ENCODE measurements at regions of chr3 and their contacts with region 1.

Region 1: GRCh38 chr3:112561731-112562688 is at the starts of genes ATG3 and SLC35A5:
- DNase-seq: peak; percentile 97 to 100 (median 99)
- ATAC-seq: peak; percentile 88
- H3K4me3 ChIP-seq: peak within 1 kb of the TSS; percentile 86
- H3K4me3 Mint-ChIP-seq: peak within 1 kb of the TSS; percentile 93 to 100 (median 98)
- H3K27ac ChIP-seq: peak within 1 kb of the TSS; percentile 91
- H3K27ac Mint-ChIP-seq: peak within 1 kb of the TSS; percentile 96 to 100 (median 99)
- H3K4me1 ChIP-seq: peaks cover 13 to 15% of the 10 kb centered on the region in 2 donors
- H3K4me1 Mint-ChIP-seq: peaks cover 25 to 73% (median 58%) of the 10 kb centered on the region in 7 donors
- H3K27me3 ChIP-seq: no peaks in the 10 kb centered on the region
- H3K27me3 Mint-ChIP-seq: no peaks in the 10 kb centered on the region
- total RNA-seq, gene ATG3: 35.1 to 65.8 (median 50.3) TPM
- total RNA-seq, gene SLC35A5: 10.4 to 24.6 (median 20.8) TPM

Region 2: GRCh38 chr3:112074721-112075497 is 487.1 kb before region 1 on chr3:
- CTCF ChIA-PET with region 1: no interaction called
- POLR2A ChIA-PET with region 1: interaction called, 6 read pairs
- intact Hi-C with region 1: loop called in 1 of 2 experiments (anchors 1 kb)
- DNase-seq: peak in 8 of 9 donors; percentile 29 to 60 (median 52)
- ATAC-seq: peak; percentile 88
- H3K4me3 ChIP-seq: no peak overlapping the region
- H3K4me3 Mint-ChIP-seq: peak overlapping the region; percentile 32 to 76 (median 56)
- H3K27ac ChIP-seq: peak overlapping the region; percentile 32
- H3K27ac Mint-ChIP-seq: peak overlapping the region; percentile 72 to 95 (median 85)
- H3K4me1 ChIP-seq: peaks cover 4 to 17% of the 10 kb centered on the region in 2 donors
- H3K4me1 Mint-ChIP-seq: peaks cover 17 to 57% (median 51%) of the 10 kb centered on the region in 7 donors
- H3K27me3 ChIP-seq: no peaks in the 10 kb centered on the region
- H3K27me3 Mint-ChIP-seq: peaks cover 0 to 3% (median 0%) of the 10 kb centered on the region in 5 donors

Region 3: DNA sequence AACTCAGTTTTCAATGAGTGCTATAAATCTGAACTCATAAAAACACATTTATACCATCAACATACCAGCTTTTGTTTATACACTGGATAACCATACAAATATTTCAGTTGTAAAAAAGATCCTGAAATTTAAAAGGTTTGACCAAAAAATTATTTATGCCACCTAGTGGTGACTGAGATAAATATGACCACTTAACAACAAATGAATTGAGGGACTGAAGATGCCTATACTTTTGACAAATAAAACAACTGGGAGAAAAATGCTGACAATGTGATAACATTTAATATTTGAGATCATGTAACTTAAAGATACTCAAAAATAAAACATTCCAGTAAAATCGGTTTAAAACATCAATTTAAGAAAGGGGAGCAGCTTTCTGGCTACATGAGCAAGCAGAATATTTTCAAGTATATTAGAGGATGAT is 30.6 kb before region 1 on chr3:
- CTCF ChIA-PET with region 1: no interaction called
- POLR2A ChIA-PET with region 1: interaction called, 10 read pairs
- intact Hi-C with region 1: no loop called
- DNase-seq: peak in 5 of 9 donors; percentile 25 to 40 (median 25)
- ATAC-seq: peak; percentile 45
- H3K4me3 ChIP-seq: no peak overlapping the region
- H3K4me3 Mint-ChIP-seq: no peak overlapping the region
- H3K27ac ChIP-seq: no peak overlapping the region
- H3K27ac Mint-ChIP-seq: peak overlapping the region in 6 of 9 donors; percentile 7 to 72 (median 14)
- H3K4me1 ChIP-seq: no peaks in the 10 kb centered on the region
- H3K4me1 Mint-ChIP-seq: peaks cover 0 to 5% (median 3%) of the 10 kb centered on the region in 7 donors
- H3K27me3 ChIP-seq: no peaks in the 10 kb centered on the region
- H3K27me3 Mint-ChIP-seq: no peaks in the 10 kb centered on the region

Region 4: GRCh38 chr3:112973325-112974177 is 411.5 kb after region 1 on chr3:
- CTCF ChIA-PET with region 1: interaction called, 5 read pairs
- POLR2A ChIA-PET with region 1: no interaction called
- intact Hi-C with region 1: loop called in 1 of 2 experiments (anchors 5 kb)
- DNase-seq: peak in 8 of 9 donors; percentile 31 to 64 (median 52)
- ATAC-seq: peak; percentile 87
- H3K4me3 ChIP-seq: peak overlapping the region; percentile 72
- H3K4me3 Mint-ChIP-seq: peak overlapping the region; percentile 83 to 98 (median 94)
- H3K27ac ChIP-seq: peak overlapping the region; percentile 80
- H3K27ac Mint-ChIP-seq: peak overlapping the region; percentile 86 to 97 (median 95)
- H3K4me1 ChIP-seq: peaks cover 28 to 43% of the 10 kb centered on the region in 2 donors
- H3K4me1 Mint-ChIP-seq: peaks cover 56 to 88% (median 74%) of the 10 kb centered on the region in 7 donors
- H3K27me3 ChIP-seq: no peaks in the 10 kb centered on the region
- H3K27me3 Mint-ChIP-seq: no peaks in the 10 kb centered on the region

Region 5: GRCh38 chr3:113531826-113532697 is 970.1 kb after region 1 on chr3 and contains the start of gene SIDT1:
- CTCF ChIA-PET with region 1: no interaction called
- POLR2A ChIA-PET with region 1: no interaction called
- intact Hi-C with region 1: loop called (anchors 1 to 5 kb)
- DNase-seq: peak; percentile 31 to 87 (median 78)
- ATAC-seq: peak; percentile 87
- H3K4me3 ChIP-seq: peak within 1 kb of the TSS; percentile 96
- H3K4me3 Mint-ChIP-seq: peak within 1 kb of the TSS; percentile 92 to 100 (median 98)
- H3K27ac ChIP-seq: peak within 1 kb of the TSS; percentile 95
- H3K27ac Mint-ChIP-seq: peak within 1 kb of the TSS; percentile 97 to 100 (median 99)
- H3K4me1 ChIP-seq: peaks cover 28 to 40% of the 10 kb centered on the region in 2 donors
- H3K4me1 Mint-ChIP-seq: peaks cover 33 to 69% (median 57%) of the 10 kb centered on the region in 7 donors
- H3K27me3 ChIP-seq: no peaks in the 10 kb centered on the region
- H3K27me3 Mint-ChIP-seq: peaks cover 0 to 16% (median 0%) of the 10 kb centered on the region in 5 donors
- total RNA-seq, gene SIDT1: 32.1 to 65.7 (median 60.7) TPM